ENCODE measurements at regions of chr11 and their contacts with region 1.

Region 1: DNA sequence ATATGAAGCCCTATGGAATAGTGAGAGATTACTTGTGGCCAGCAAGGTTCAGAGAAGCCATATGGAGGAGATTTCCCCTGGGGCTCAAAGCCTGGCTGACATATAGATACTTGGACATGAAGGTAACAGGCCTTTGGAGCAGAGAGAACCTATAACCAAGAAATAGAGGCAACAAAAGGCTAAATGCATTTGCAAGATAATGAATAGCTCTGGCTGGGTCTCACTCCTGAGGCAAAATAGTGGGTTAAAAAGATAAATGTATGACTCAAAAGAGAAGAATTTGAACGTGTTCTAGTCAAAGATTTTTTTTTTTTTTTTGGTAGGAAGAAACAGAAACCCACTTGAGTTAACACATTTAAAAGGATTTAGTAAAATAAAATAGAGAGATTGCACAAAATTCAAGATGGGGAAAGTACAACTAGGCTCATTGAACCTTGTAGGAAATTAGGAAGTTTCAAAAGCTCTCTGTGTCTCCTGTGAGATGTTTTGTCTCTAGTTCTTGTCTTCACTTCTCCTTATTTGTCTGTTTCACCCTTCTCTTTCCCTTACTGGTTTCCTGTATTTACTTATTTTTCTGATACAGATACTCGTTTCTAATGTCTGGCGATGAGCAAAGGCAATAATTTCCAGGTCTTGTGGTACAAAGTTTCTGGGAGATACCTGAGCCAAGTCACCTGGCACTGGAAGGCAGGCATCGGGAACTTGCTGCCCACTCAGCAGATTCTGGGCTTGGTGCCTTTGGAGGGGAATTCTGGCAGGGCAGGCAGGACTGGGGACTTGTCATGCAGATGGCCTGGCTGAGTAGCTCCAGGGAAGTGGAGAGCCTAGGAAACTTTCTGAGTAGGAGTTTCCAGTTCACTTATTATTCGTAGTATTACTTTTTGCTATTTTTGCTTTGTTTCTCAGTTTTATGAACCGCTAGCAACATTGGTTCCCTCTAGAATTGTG is 49.2 kb upstream of the SESN3 start:
- DNase-seq: no peak
- H3K4me3 ChIP-seq: no peak overlapping the region
- H3K4me3 Mint-ChIP-seq: peak overlapping the region; percentile 31
- H3K27ac Mint-ChIP-seq: peak overlapping the region; percentile 83
- H3K4me1 ChIP-seq: peaks cover 68% of the 10 kb centered on the region
- H3K4me1 Mint-ChIP-seq: peaks cover 52% of the 10 kb centered on the region
- H3K27me3 ChIP-seq: no peaks in the 10 kb centered on the region
- H3K27me3 Mint-ChIP-seq: no peaks in the 10 kb centered on the region
- CTCF ChIP-seq: no peak

Region 2: DNA sequence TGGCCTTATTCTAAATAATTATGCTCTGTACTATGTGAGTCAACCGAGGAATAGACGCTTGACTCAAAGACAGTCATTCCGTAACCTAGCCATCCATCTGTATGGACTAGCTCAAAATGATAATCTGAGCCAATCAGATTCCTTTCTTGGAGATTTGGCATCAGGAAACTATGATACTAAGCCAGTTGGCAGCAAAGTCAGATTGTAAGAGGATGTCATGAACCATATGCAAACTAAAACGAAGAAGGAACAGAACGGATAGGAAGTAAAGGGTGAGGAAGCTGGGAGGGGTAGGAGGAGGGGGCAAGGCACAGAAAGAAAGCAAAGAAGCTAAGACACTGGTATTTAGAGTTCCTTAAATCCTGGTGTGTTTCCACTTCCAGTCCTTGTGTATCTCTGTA is 38.5 kb before region 1 on chr11:
- CTCF ChIA-PET with region 1: interaction called, 9 read pairs
- POLR2A ChIA-PET with region 1: interaction called, 8 read pairs
- intact Hi-C with region 1: loop called (anchors 1 kb)
- DNase-seq: no peak
- H3K4me3 ChIP-seq: no peak overlapping the region
- H3K4me3 Mint-ChIP-seq: no peak overlapping the region
- H3K27ac Mint-ChIP-seq: peak overlapping the region; percentile 72
- H3K4me1 ChIP-seq: peaks cover 45% of the 10 kb centered on the region
- H3K4me1 Mint-ChIP-seq: peaks cover 31% of the 10 kb centered on the region
- H3K27me3 ChIP-seq: no peaks in the 10 kb centered on the region
- H3K27me3 Mint-ChIP-seq: no peaks in the 10 kb centered on the region
- CTCF ChIP-seq: no peak

Region 3: DNA sequence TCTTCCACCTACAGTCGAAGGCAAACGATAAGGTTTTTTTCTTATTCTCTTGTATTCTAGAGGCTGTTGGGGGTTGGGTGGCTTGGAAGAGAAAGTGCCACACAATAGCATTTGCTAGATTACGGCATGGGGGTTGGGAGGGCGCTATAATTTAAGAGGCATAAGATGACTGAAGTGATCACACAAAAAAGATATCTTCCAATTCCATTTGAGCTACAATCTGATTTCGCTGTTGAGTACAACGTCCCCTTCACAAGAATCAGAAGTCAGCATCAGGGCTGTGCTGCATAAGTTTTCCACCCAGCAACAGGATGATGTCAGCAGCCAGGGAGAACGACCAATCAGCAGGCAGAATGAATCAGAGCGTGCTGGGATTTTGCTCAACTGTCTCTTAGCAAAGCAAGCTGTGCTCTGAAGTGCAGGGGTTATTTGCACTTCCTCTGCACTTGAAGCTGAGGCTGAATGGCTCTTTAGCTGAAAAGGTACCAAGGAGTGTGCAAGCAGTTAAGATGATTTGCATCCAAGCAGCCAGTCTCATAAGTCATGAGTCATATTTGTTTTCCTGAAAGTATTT is 26.0 kb before region 1 on chr11:
- CTCF ChIA-PET with region 1: interaction called, 4 read pairs
- POLR2A ChIA-PET with region 1: no interaction called
- intact Hi-C with region 1: loop called (anchors 1 kb)
- DNase-seq: peak; percentile 77 to 81
- H3K4me3 ChIP-seq: peak overlapping the region; percentile 1; the same call in 1 of the 2 replicates
- H3K4me3 Mint-ChIP-seq: peak overlapping the region; percentile 67
- H3K27ac Mint-ChIP-seq: no peak overlapping the region
- H3K4me1 ChIP-seq: peaks cover 42% of the 10 kb centered on the region
- H3K4me1 Mint-ChIP-seq: peaks cover 30% of the 10 kb centered on the region
- H3K27me3 ChIP-seq: no peaks in the 10 kb centered on the region
- H3K27me3 Mint-ChIP-seq: no peaks in the 10 kb centered on the region
- CTCF ChIP-seq: no peak

Region 4: DNA sequence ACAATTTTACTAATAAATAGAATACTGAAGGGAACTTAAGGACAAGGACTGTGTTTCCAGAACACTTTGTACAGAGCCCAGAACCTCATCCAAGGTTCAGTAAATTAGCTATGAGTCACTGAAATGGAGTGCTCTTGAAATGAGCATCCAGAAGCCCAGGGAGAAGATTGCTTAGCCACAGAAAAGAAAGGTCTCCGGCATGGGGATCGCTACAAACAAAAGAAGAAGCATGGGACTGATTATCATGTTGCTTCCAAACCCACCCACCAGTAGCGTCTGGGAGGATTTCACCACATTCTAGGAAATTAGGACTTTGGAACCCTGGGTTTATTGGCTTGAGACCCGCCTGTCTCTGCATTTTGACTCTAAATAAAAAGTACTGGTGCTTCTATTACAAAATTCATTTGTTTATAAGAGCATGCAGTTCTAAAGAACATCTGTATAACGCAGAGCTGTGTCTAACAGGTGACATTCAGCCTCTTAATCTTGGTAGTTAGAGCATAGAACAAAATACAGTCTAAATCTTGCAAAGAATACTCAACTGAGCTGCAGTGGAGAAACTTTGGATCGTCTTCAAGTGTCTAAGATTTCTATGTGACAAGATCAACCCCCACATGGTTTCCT is 13.3 kb before region 1 on chr11:
- CTCF ChIA-PET with region 1: no interaction called
- POLR2A ChIA-PET with region 1: no interaction called
- intact Hi-C with region 1: no loop called
- DNase-seq: no peak
- H3K4me3 ChIP-seq: no peak overlapping the region
- H3K4me3 Mint-ChIP-seq: no peak overlapping the region
- H3K27ac Mint-ChIP-seq: no peak overlapping the region
- H3K4me1 ChIP-seq: no peaks in the 10 kb centered on the region
- H3K4me1 Mint-ChIP-seq: peaks cover 7% of the 10 kb centered on the region
- H3K27me3 ChIP-seq: no peaks in the 10 kb centered on the region
- H3K27me3 Mint-ChIP-seq: no peaks in the 10 kb centered on the region
- CTCF ChIP-seq: no peak

Region 5: DNA sequence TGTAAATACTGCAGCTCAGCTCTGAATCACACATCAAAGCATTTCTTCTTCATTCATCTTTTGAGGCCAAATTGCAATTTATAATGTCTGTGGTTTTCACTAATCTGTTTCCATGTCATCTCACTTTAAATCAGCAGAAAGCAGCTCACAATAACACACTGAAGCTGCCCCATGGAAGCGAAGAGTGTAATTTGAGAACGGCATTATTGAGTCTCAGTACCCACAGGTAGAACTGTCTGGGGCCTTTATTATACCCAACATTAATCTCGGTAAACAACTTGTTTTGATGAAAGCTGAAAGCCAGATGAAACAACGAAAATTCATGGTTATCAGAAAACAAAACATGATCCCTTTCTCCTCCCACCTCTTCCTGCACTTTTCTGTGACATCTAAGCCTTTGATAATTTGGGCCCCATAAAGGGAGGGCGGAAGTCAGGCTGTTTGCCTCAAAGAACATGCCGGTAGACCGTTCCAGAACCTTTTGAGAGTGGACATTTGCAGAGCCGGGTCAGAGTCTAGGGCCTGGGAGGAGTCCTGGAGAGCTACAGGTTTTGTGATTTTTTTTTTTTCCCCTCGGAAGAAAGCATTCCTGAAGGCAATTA is 19.0 kb after region 1 on chr11:
- CTCF ChIA-PET with region 1: interaction called, 3 read pairs
- POLR2A ChIA-PET with region 1: interaction called, 5 read pairs
- intact Hi-C with region 1: loop called (anchors 1 kb)
- DNase-seq: peak; percentile 47 to 57
- H3K4me3 ChIP-seq: no peak overlapping the region
- H3K4me3 Mint-ChIP-seq: no peak overlapping the region
- H3K27ac Mint-ChIP-seq: no peak overlapping the region
- H3K4me1 ChIP-seq: peaks cover 30% of the 10 kb centered on the region
- H3K4me1 Mint-ChIP-seq: peaks cover 21% of the 10 kb centered on the region
- H3K27me3 ChIP-seq: no peaks in the 10 kb centered on the region
- H3K27me3 Mint-ChIP-seq: no peaks in the 10 kb centered on the region
- CTCF ChIP-seq: no peak

Region 6: GRCh38 chr11:95338430-95338991 is 58.3 kb after region 1 on chr11:
- CTCF ChIA-PET with region 1: interaction called, 3 read pairs
- POLR2A ChIA-PET with region 1: no interaction called
- intact Hi-C with region 1: loop called (anchors 2 kb)
- DNase-seq: no peak
- H3K4me3 ChIP-seq: no peak overlapping the region
- H3K4me3 Mint-ChIP-seq: no peak overlapping the region
- H3K27ac Mint-ChIP-seq: no peak overlapping the region
- H3K4me1 ChIP-seq: peaks cover 14% of the 10 kb centered on the region
- H3K4me1 Mint-ChIP-seq: peaks cover 7% of the 10 kb centered on the region
- H3K27me3 ChIP-seq: no peaks in the 10 kb centered on the region
- H3K27me3 Mint-ChIP-seq: no peaks in the 10 kb centered on the region
- CTCF ChIP-seq: no peak

Region 7: DNA sequence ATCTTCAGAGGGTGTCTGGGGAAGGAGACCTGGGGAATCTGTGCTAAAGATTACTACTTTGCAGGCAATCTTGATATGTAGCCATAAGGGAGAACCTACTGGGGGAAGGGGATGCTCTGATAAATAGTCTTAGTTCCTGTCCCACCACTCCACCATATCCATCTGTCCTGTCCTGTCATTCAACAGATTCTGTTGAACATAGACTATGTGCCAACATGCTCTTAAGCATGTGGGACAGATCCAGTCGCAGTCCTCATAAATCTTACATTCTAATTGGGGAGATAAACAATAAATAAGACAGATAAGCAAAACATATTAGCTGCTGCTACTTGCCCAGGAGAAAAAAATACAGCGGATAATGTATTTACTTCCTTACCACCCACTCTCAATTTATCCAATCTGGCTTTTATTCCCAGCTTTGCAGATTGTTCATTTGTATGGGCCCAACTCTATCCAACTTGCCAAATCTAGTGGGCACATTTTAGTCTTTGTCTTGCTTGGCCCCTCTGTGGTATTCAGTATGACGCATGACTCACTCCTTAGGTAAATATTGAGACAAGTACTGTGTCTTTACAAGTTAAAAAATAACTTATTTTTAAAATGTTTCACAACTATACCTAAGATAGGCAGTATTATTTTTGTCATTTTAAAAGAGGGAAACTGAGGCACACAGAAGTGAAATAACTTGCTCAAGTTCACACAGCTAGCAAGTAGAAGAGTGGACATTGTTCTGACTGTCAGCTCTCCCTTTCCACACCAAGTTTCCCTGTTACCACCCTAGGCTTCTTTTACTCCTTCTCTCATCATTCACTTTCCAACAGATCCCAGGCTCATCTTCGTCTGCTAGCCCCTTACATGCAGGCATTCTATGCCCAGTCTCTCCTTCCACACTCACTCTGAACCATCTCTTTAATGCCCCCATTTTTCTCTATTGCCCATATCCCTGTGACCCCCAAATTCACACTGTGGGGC is 84.4 kb after region 1 on chr11:
- CTCF ChIA-PET with region 1: no interaction called
- POLR2A ChIA-PET with region 1: no interaction called
- intact Hi-C with region 1: loop called (anchors 2 kb)
- DNase-seq: peak in 1 of 2 experiments; percentile 61
- H3K4me3 ChIP-seq: no peak overlapping the region
- H3K4me3 Mint-ChIP-seq: peak overlapping the region; percentile 50
- H3K27ac Mint-ChIP-seq: peak overlapping the region; percentile 80
- H3K4me1 ChIP-seq: peaks cover 37% of the 10 kb centered on the region
- H3K4me1 Mint-ChIP-seq: peaks cover 38% of the 10 kb centered on the region
- H3K27me3 ChIP-seq: no peaks in the 10 kb centered on the region
- H3K27me3 Mint-ChIP-seq: no peaks in the 10 kb centered on the region
- CTCF ChIP-seq: no peak

Region 8: DNA sequence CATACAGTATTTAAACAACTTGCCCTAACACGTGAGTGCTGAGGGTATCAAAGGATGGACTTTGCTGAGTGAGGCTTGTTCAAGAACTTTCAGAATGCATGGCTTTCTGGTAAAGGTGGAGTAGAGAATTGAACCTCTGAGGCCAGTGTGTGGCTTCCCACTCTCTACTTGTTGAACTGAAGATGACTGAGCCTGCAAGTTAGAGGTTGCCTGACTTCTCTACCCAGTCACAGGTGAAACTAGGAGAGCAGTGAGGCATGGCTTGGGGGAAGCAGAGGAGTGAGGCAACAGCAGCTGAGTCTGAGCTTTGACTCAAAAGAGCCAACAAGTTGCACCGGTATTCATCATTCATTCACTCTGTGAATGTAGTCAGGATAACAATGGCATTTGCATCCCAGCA is 207.2 kb after region 1 on chr11:
- CTCF ChIA-PET with region 1: no interaction called
- POLR2A ChIA-PET with region 1: interaction called, 3 read pairs
- intact Hi-C with region 1: loop called (anchors 1 kb)
- DNase-seq: peak; percentile 77 to 81
- H3K4me3 ChIP-seq: no peak overlapping the region
- H3K4me3 Mint-ChIP-seq: peak overlapping the region; percentile 73
- H3K27ac Mint-ChIP-seq: peak overlapping the region; percentile 96
- H3K4me1 ChIP-seq: peaks cover 29% of the 10 kb centered on the region
- H3K4me1 Mint-ChIP-seq: peaks cover 30% of the 10 kb centered on the region
- H3K27me3 ChIP-seq: no peaks in the 10 kb centered on the region
- H3K27me3 Mint-ChIP-seq: no peaks in the 10 kb centered on the region
- CTCF ChIP-seq: no peak

Measured in Caco-2 (cell line).